ENCODE measurements at regions of chr6 and their contacts with region 1.

Region 1: GRCh38 chr6:10800829-10801535 is 37.4 kb downstream of the MAK start:
- DNase-seq: peak; percentile 90
- H3K4me3 Mint-ChIP-seq: no peak overlapping the region
- H3K27ac Mint-ChIP-seq: no peak overlapping the region
- H3K4me1 Mint-ChIP-seq: no peaks in the 10 kb centered on the region
- H3K27me3 Mint-ChIP-seq: no peaks in the 10 kb centered on the region

Region 2: DNA sequence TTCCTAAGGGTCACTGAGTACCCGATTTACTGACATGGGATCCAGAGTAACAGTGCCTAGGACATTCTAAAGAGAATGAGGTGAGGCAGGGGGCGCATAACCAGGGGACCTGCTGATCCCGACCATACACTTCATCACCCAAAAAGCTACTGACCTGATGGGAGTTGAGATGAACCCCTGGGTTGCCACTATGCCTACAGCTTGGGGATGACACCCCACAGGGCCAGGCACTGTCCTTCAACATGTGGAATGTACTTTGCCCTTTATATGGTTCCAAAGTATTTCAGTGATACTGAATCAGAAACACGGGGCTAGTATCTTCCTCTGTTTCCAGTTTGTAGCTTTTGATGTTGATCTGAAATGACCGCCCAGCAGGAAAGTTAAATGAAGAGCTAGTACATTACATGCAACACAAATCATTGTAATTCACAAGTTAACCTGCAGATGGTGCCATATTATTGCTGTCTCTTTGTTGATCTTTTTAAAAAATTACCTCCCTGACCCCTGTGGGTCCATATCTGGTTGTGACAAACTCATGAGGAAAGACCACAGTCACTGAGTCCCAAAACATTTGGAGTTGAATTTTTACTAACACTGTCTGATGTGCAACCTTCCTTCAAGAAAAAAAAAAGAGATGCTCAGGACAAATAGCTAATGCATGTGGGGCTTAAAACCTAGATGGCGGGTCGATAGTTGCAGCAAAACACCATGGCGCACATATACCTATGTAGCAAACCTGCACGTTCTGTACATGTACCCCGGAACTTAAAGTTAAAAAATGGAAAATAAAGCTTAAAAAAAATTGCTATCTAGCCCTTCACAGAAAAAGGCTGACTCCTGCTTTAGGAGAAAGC is 322.6 kb before region 1 on chr6:
- intact Hi-C with region 1: loop called (anchors 1 kb)
- DNase-seq: peak; percentile 72
- H3K4me3 Mint-ChIP-seq: no peak overlapping the region
- H3K27ac Mint-ChIP-seq: no peak overlapping the region
- H3K4me1 Mint-ChIP-seq: peaks cover 3% of the 10 kb centered on the region
- H3K27me3 Mint-ChIP-seq: peaks cover 8% of the 10 kb centered on the region

Region 3: GRCh38 chr6:10510592-10511367 is 290.2 kb before region 1 on chr6:
- intact Hi-C with region 1: loop called (anchors 1 kb)
- DNase-seq: peak; percentile 87
- H3K4me3 Mint-ChIP-seq: no peak overlapping the region
- H3K27ac Mint-ChIP-seq: no peak overlapping the region
- H3K4me1 Mint-ChIP-seq: peaks cover 6% of the 10 kb centered on the region
- H3K27me3 Mint-ChIP-seq: peaks cover 7% of the 10 kb centered on the region